ENCODE measurements at regions of chr10 and their contacts with region 1.

Region 1: DNA sequence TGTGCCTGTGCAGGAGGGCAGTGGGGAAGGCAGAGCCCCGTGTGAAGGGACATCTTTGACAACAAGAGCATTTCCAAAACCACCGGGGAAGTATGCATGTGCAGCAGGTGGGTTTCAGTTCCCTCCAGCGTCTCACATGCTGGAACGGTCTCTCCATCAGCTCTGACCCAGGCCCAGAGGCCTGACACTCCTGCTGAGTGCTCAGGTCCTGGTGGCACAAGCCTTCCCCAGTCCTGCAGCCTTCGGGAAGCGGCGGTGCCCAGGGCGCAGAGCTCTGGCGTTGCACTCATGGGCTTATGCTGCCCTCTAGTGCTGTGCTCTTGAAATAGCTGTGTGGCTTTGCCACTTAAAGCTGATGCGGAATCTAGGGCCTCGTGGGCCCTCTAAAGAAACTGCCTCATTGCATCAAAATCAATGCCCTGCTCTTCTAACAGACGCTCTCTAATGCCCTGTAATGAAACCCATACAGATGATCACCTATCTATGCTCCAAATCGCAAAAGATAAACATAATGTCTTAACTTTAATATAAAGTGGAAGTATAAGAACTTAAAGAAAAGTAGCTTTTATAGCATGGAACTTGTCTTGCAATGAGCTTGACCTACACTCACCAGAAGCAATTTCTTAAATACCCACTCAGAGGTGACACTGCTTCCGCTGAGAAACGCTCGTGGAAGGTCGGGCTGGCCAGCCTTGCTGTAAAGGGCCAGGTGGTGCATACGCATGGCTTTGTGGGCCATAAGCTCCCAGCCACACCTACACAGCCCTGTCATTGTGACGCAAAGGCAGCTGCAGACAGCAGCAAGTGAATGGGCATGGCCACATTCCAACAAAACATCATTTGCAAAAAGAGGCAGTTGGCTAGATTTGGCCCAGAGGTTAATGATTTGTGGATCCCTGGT is 38.6 kb downstream of the CLRN3 start:
- DNase-seq: peak; percentile 51 to 85
- H3K4me3 ChIP-seq: no peak overlapping the region
- H3K27ac ChIP-seq: no peak overlapping the region
- H3K4me1 ChIP-seq: peaks cover 0 to 5% (median 2%) of the 10 kb centered on the region in 4 experiments; a peak in 4 of 7 replicates
- H3K27me3 ChIP-seq: no peaks in the 10 kb centered on the region
- CTCF ChIP-seq: peak; percentile 77 to 93 (median 88)
- EP300 ChIP-seq: no peak
- POLR2A ChIP-seq: no peak
- RAD21 ChIP-seq: peak; percentile 99

Region 2: GRCh38 chr10:127679642-127680255 is 174.4 kb before region 1 on chr10:
- CTCF ChIA-PET with region 1: interaction called, 34 read pairs
- POLR2A ChIA-PET with region 1: no interaction called
- DNase-seq: no peak
- H3K4me3 ChIP-seq: no peak overlapping the region
- H3K27ac ChIP-seq: no peak overlapping the region
- H3K4me1 ChIP-seq: no peaks in the 10 kb centered on the region
- H3K27me3 ChIP-seq: no peaks in the 10 kb centered on the region
- CTCF ChIP-seq: peak; percentile 35 to 59 (median 44); a peak in 3 of 4 replicates
- EP300 ChIP-seq: no peak
- POLR2A ChIP-seq: no peak
- RAD21 ChIP-seq: peak; percentile 57 to 61

Region 3: DNA sequence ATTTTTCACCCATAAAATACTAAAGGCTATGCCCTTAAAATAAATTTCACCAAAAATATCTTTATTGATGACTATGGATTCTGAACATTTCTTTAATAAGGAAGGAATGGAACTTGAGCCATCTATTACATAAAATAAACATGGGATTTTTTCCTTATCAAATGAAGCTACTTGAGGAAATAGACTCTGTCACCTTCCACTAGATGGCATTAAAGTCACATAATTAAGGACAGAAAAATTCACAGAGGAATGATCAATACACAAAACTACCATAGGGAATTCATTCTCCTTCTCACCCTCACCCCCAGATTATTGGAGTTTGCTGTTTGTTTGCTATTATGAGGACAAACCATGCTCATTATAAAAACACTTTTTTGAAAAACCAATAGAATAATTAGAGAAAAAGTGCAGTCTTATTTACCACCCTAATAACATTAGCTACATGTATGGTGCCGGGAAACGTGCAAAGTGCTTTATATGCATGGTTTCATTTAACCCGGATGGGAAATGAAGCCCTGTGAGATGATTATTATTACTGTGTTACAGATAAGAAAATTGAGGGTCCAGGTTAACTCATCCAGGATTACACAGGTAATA is 138.2 kb before region 1 on chr10:
- CTCF ChIA-PET with region 1: interaction called, 141 read pairs
- POLR2A ChIA-PET with region 1: no interaction called
- DNase-seq: no peak
- H3K4me3 ChIP-seq: no peak overlapping the region
- H3K27ac ChIP-seq: no peak overlapping the region
- H3K4me1 ChIP-seq: no peaks in the 10 kb centered on the region
- H3K27me3 ChIP-seq: no peaks in the 10 kb centered on the region
- CTCF ChIP-seq: peak in 2 of 3 experiments; percentile 35 to 41; a peak in 2 of 4 replicates
- EP300 ChIP-seq: no peak
- POLR2A ChIP-seq: no peak
- RAD21 ChIP-seq: peak; percentile 71 to 76

Region 4: GRCh38 chr10:127774766-127775559 is 79.2 kb before region 1 on chr10:
- CTCF ChIA-PET with region 1: no interaction called
- POLR2A ChIA-PET with region 1: no interaction called
- DNase-seq: no peak
- H3K4me3 ChIP-seq: no peak overlapping the region
- H3K27ac ChIP-seq: no peak overlapping the region
- H3K4me1 ChIP-seq: no peaks in the 10 kb centered on the region
- H3K27me3 ChIP-seq: no peaks in the 10 kb centered on the region
- CTCF ChIP-seq: no peak
- EP300 ChIP-seq: no peak
- POLR2A ChIP-seq: no peak
- RAD21 ChIP-seq: no peak

Region 5: GRCh38 chr10:127826154-127826725 is 27.9 kb before region 1 on chr10:
- CTCF ChIA-PET with region 1: interaction called, 11 read pairs
- POLR2A ChIA-PET with region 1: no interaction called
- DNase-seq: no peak
- H3K4me3 ChIP-seq: no peak overlapping the region
- H3K27ac ChIP-seq: no peak overlapping the region
- H3K4me1 ChIP-seq: peaks cover 0 to 3% (median 1%) of the 10 kb centered on the region in 4 experiments; a peak in 2 of 7 replicates
- H3K27me3 ChIP-seq: no peaks in the 10 kb centered on the region
- CTCF ChIP-seq: no peak
- EP300 ChIP-seq: no peak
- POLR2A ChIP-seq: no peak
- RAD21 ChIP-seq: no peak

Region 6: DNA sequence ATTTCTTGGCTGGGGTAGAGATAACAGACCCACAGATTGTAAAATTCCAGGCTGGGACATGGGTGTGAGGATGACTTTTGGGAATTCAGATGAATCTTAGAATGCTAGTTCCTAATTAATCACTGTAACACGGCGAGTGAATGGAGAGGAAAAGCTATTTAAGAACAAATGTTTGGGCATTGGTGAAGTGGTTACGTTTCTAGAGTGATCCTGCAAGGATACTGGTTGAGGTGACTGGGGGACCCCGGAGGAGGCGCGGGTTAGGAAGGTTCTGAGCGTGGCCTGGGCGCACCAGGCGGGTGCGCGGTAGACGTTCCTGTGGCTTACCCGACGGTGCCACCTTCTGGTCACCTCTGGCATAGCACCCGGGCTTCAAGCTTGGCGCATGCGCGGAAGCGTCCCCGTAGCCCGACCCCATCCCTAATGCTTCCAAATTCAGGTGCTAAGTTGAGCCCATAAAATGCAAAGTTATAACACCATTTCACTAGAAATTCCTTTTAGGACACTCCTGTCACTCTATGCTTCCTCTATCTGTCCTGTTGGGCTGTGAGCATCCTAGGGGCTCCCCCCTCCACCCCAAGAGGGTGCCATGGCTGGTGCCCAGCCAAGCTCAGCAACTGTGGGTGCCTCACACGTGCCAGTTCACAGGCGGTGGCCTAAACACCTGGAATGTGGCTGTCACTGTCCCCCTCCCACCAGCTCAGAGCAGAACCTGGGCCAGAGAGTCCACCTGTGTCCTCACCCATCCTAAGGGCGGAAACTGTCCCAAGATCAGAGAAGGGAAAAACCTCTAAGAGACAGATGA is 157.3 kb after region 1 on chr10:
- CTCF ChIA-PET with region 1: interaction called, 11 read pairs
- POLR2A ChIA-PET with region 1: no interaction called
- DNase-seq: peak; percentile 47 to 98
- H3K4me3 ChIP-seq: no peak overlapping the region; a peak in 1 of 8 replicates
- H3K27ac ChIP-seq: no peak overlapping the region
- H3K4me1 ChIP-seq: peaks cover 0 to 4% (median 0%) of the 10 kb centered on the region in 4 experiments; a peak in 1 of 7 replicates
- H3K27me3 ChIP-seq: no peaks in the 10 kb centered on the region; a peak in 1 of 7 replicates
- CTCF ChIP-seq: peak; percentile 94 to 98 (median 98)
- EP300 ChIP-seq: no peak
- POLR2A ChIP-seq: no peak
- RAD21 ChIP-seq: peak; percentile 94 to 95

Region 7: GRCh38 chr10:128265596-128265995 is 411.5 kb after region 1 on chr10:
- CTCF ChIA-PET with region 1: no interaction called
- POLR2A ChIA-PET with region 1: no interaction called
- DNase-seq: no peak
- H3K4me3 ChIP-seq: no peak overlapping the region
- H3K27ac ChIP-seq: no peak overlapping the region
- H3K4me1 ChIP-seq: peaks cover 0 to 5% (median 0%) of the 10 kb centered on the region in 4 experiments; a peak in 3 of 7 replicates
- H3K27me3 ChIP-seq: no peaks in the 10 kb centered on the region; a peak in 2 of 7 replicates
- CTCF ChIP-seq: no peak
- EP300 ChIP-seq: no peak
- POLR2A ChIP-seq: no peak
- RAD21 ChIP-seq: no peak

Measured in H1 (cell line).